PC-3 (cell line): ENCODE measurements at regions of chr7 and their contacts with region 1.

Region 1: GRCh38 chr7:112262855-112263487 is 56.5 kb downstream of the ZNF277 start:
- DNase-seq: no peak
- ATAC-seq: peak; percentile 43; the same call in 1 of the 2 replicates
- H3K4me3 ChIP-seq: no peak overlapping the region
- H3K27ac ChIP-seq: no peak overlapping the region
- H3K4me1 ChIP-seq: peaks cover 13% of the 10 kb centered on the region
- H3K27me3 ChIP-seq: no peaks in the 10 kb centered on the region
- CTCF ChIP-seq: no peak

Region 2: GRCh38 chr7:112238852-112239610 is 23.9 kb before region 1 on chr7:
- CTCF ChIA-PET with region 1: no interaction called
- POLR2A ChIA-PET with region 1: no interaction called
- intact Hi-C with region 1: loop called (anchors 2 kb)
- DNase-seq: peak; percentile 94
- ATAC-seq: peak; percentile 93
- H3K4me3 ChIP-seq: peak overlapping the region; percentile 40; the same call in 1 of the 2 replicates
- H3K27ac ChIP-seq: peak overlapping the region; percentile 93
- H3K4me1 ChIP-seq: peaks cover 49% of the 10 kb centered on the region
- H3K27me3 ChIP-seq: no peaks in the 10 kb centered on the region
- CTCF ChIP-seq: no peak